Left colon (tissue), 2 donors: ENCODE measurements at regions of chr3 and their contacts with region 1.

Region 1: DNA sequence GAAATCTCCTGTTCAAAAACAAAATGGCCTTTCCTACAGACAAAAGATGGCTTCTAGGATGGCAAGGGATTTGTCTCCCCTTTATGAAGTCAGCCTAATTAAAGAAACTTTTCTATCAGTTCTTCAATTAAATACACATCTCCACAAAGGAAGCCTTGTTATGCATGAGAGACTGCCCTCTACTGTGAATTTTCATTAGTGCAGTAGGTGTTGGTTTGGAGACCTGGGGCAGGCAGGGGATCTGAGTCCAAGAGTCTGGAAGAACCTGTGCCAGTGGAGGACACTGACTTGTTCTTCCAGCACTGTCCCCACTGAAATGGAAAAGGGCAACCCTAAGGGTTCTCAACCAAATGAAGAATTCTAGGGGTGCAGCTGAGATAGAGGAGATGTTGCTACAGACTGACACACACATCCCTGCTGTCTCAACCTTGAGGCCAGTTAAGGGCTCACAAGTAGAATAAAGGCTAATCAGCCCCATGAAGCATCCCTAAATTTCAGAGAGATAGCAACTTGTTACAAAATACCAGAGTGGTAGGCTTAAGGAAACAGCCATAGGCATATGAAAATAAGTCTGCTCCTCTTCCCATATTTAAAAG is 174.0 kb upstream of the PRICKLE2 start:
- DNase-seq: no peak
- ATAC-seq: peak; percentile 62

Region 2: GRCh38 chr3:64030741-64031140 is 368.6 kb before region 1 on chr3:
- intact Hi-C with region 1: loop called in 1 of 2 experiments (anchors 2 kb)
- DNase-seq: peak; percentile 57 to 78
- ATAC-seq: peak; percentile 92

Region 3: GRCh38 chr3:64267721-64268604 is 131.3 kb before region 1 on chr3:
- intact Hi-C with region 1: loop called in 1 of 2 experiments (anchors 10 kb)
- DNase-seq: peak; percentile 16 to 60
- ATAC-seq: peak; percentile 35

Region 4: DNA sequence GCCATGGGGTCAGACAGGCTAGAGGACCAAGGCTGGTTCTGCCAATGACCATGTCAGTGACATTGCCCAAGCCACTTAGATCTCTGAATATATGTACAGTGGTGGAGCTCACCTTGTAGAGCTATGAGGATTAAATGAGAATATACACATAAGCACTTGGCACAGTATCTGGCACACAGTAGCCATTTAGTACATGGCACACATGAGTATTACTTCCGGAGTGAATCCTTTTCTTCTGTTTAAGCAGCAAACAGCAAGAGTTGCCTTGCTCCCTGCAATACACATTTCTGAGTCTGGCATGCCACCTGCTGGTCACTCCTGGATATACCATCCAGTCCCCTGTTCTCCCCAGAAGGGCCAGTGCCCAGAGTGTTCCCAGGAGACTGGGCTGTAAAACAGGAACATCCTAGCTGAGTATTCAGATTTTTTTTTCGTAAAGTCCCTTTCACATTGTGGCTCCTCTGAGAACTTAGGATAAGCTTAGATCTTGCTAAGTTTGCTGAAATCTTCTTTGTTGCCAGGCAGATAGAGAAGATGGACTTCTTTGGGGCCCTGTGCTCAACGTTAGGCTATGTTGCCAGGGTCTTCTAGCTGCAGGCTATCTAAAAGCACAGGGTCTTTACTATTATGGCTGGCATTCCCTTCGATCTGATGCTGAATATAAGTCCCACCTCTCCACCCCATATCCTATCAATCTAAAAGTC is 85.1 kb after region 1 on chr3:
- intact Hi-C with region 1: loop called in 1 of 2 experiments (anchors 10 kb)
- DNase-seq: peak; percentile 60 to 76
- ATAC-seq: peak; percentile 91